SK-N-SH (cell line): ENCODE measurements at regions of chr4 and their contacts with region 1.

Region 1: GRCh38 chr4:106369456-106370060 is 980 bp upstream of the GIMD1 start:
- DNase-seq: peak; percentile 14
- H3K4me3 ChIP-seq: peak overlapping the region in 1 of 2 experiments; percentile 21; a peak in 1 of 4 replicates
- H3K27ac ChIP-seq: peak overlapping the region; percentile 28 to 41; a peak in 2 of 4 replicates
- H3K4me1 ChIP-seq: peaks cover 0 to 8% of the 10 kb centered on the region in 2 experiments; a peak in 2 of 4 replicates
- H3K27me3 ChIP-seq: no peaks in the 10 kb centered on the region
- CTCF ChIP-seq: peak; percentile 82
- EP300 ChIP-seq: no peak
- RAD21 ChIP-seq: peak; percentile 78

Region 2: DNA sequence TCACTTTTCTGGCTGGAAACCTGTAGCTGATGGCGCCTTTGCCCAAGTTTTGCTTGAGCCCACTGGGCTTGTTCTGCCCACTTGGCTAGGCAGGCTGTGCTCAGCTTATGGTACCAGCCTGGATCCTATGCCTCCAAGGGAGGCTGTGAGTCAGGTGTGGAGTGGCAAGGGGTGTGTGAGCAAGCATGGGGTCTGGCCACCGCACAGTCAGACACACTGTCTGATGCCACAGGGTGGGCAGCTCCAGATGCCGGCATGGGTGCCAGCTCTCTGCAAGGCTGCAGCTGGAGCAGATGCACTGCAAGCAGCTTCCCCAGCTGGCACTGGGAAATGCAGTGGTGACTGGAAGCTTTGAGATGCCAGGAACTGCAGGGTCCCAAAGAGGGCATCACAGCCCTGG is 15.3 kb after region 1 on chr4:
- CTCF ChIA-PET with region 1: interaction called, 19 read pairs
- POLR2A ChIA-PET with region 1: no interaction called
- DNase-seq: no peak
- H3K4me3 ChIP-seq: no peak overlapping the region
- H3K27ac ChIP-seq: no peak overlapping the region
- H3K4me1 ChIP-seq: no peaks in the 10 kb centered on the region
- H3K27me3 ChIP-seq: no peaks in the 10 kb centered on the region
- CTCF ChIP-seq: no peak
- EP300 ChIP-seq: no peak
- RAD21 ChIP-seq: no peak